ENCODE measurements at regions of chr2 and their contacts with region 1.

Region 1: GRCh38 chr2:26144953-26145680 is 27.8 kb upstream of the GAREM2 start:
- DNase-seq: peak; percentile 51
- ATAC-seq: peak; percentile 71
- H3K4me3 ChIP-seq: no peak overlapping the region
- H3K27ac ChIP-seq: no peak overlapping the region
- H3K4me1 ChIP-seq: peaks cover 15% of the 10 kb centered on the region
- H3K27me3 ChIP-seq: no peaks in the 10 kb centered on the region
- CTCF ChIP-seq: peak; percentile 89

Region 2: GRCh38 chr2:25851740-25852503 is 293.2 kb before region 1 on chr2:
- CTCF ChIA-PET with region 1: no interaction called
- POLR2A ChIA-PET with region 1: interaction called, 4 read pairs
- in situ Hi-C with region 1: no loop called
- intact Hi-C with region 1: loop called (anchors 5 kb)
- DNase-seq: peak; percentile 81
- ATAC-seq: peak; percentile 90
- H3K4me3 ChIP-seq: peak overlapping the region; percentile 19 to 21
- H3K27ac ChIP-seq: peak overlapping the region; percentile 78
- H3K4me1 ChIP-seq: peaks cover 30% of the 10 kb centered on the region
- H3K27me3 ChIP-seq: no peaks in the 10 kb centered on the region
- CTCF ChIP-seq: peak; percentile 72

Region 3: GRCh38 chr2:25878361-25879132 is 266.6 kb before region 1 on chr2 and contains the start of gene ASXL2:
- CTCF ChIA-PET with region 1: no interaction called
- POLR2A ChIA-PET with region 1: interaction called, 10 read pairs
- in situ Hi-C with region 1: no loop called
- intact Hi-C with region 1: no loop called
- DNase-seq: peak; percentile 87
- ATAC-seq: peak; percentile 96
- H3K4me3 ChIP-seq: peak within 1 kb of the TSS; percentile 81 to 92
- H3K27ac ChIP-seq: peak within 1 kb of the TSS; percentile 98
- H3K4me1 ChIP-seq: peaks cover 13% of the 10 kb centered on the region; the same call in 1 of the 2 replicates
- H3K27me3 ChIP-seq: no peaks in the 10 kb centered on the region
- CTCF ChIP-seq: no peak
- total RNA-seq, gene ASXL2: 43.4 TPM

Region 4: DNA sequence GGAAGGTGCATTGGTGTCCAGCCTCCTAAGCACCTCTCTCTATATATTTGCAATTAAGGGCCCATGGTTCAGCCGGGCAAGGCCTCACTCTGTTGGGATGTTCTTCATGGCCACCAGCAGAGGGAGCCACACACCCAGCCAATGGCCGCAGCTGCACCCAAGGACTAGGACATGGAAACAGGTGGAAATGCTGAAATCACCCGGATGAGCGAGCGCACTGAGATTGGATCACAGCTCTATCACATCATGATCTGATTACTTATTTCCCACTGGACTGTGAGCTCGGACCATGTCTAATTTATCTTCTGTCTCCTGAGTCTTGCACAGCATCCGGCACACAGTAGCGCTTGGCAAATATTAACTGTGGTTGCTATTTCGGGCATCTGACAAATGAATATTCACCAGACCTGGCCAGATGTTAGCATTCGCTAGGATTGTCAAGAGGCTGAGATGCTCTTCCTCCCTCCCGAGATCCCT is 194.0 kb before region 1 on chr2:
- CTCF ChIA-PET with region 1: interaction called, 7 read pairs
- POLR2A ChIA-PET with region 1: no interaction called
- in situ Hi-C with region 1: no loop called
- intact Hi-C with region 1: loop called (anchors 1 kb)
- DNase-seq: peak; percentile 65
- ATAC-seq: peak; percentile 96
- H3K4me3 ChIP-seq: 0 out of 4 replicates have a peak overlapping the region, but pooled peaks of 1 of the 2 experiments have one; percentile 5
- H3K27ac ChIP-seq: peak overlapping the region; percentile 24; the same call in 1 of the 2 replicates
- H3K4me1 ChIP-seq: peaks cover 10% of the 10 kb centered on the region; the same call in 1 of the 2 replicates
- H3K27me3 ChIP-seq: no peaks in the 10 kb centered on the region
- CTCF ChIP-seq: peak; percentile 96

Region 5: DNA sequence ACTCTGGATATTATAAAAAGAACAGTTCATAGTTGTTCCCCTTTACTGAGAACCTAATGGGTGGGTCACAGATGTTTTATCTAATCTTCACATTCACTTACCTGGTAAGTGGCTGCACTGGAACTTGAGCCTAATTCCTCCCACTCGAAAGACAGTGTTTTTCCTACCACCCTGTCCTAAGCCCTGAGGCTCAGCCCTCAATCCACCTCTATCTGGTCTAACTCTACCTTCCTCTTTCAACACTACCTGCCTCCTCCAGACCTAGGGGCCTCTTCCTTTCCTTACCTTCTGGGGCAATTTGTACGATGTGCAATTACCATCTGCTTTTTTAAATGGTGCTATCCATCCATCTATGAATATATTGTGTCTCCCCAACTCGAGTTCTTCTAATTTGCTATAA is 153.2 kb before region 1 on chr2:
- CTCF ChIA-PET with region 1: no interaction called
- POLR2A ChIA-PET with region 1: no interaction called
- in situ Hi-C with region 1: no loop called
- intact Hi-C with region 1: loop called (anchors 2 kb)
- DNase-seq: no peak
- ATAC-seq: peak; percentile 67
- H3K4me3 ChIP-seq: no peak overlapping the region
- H3K27ac ChIP-seq: peak overlapping the region; percentile 40
- H3K4me1 ChIP-seq: peaks cover 6% of the 10 kb centered on the region; the same call in 1 of the 2 replicates
- H3K27me3 ChIP-seq: no peaks in the 10 kb centered on the region
- CTCF ChIP-seq: no peak

Region 6: DNA sequence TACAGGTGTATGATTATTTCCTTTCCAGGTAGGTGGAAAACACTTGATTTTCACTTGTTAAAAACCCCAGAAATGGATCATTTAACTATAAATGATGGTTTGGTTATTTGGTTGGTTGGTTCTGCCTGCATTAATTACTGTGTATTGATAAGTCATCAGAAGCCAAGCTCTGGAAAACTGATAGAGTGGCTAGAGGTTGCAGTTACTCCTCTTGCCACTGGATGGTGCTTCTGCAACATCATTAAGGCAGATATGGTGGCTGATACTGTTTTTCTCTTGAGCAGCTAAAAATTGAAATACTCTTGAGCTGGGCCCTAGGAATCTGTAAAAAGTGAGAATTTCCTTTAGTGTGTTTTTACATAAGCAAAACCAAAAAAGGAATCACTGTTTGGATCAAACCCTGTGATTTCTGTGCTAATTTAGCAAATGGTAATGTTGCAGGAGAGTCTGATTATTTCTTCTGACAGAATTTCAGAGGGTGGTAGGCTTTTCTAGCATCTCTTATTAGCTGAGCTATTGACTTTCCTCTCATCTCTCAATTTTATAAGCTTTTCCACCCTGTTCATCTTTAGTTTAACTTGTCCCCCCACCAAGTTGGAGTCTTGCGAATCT is 57.0 kb before region 1 on chr2:
- CTCF ChIA-PET with region 1: no interaction called
- POLR2A ChIA-PET with region 1: interaction called, 4 read pairs
- in situ Hi-C with region 1: no loop called
- intact Hi-C with region 1: loop called (anchors 5 kb)
- DNase-seq: no peak
- ATAC-seq: no peak
- H3K4me3 ChIP-seq: no peak overlapping the region
- H3K27ac ChIP-seq: no peak overlapping the region
- H3K4me1 ChIP-seq: peaks cover 6% of the 10 kb centered on the region
- H3K27me3 ChIP-seq: no peaks in the 10 kb centered on the region
- CTCF ChIP-seq: peak; percentile 81